Activated naive CD4-positive, alpha-beta T cell treated with anti-CD3 and anti-CD28 coated beads for 36 hours (primary cell): ENCODE measurements at regions of chr3 and their contacts with region 1.

Region 1: DNA sequence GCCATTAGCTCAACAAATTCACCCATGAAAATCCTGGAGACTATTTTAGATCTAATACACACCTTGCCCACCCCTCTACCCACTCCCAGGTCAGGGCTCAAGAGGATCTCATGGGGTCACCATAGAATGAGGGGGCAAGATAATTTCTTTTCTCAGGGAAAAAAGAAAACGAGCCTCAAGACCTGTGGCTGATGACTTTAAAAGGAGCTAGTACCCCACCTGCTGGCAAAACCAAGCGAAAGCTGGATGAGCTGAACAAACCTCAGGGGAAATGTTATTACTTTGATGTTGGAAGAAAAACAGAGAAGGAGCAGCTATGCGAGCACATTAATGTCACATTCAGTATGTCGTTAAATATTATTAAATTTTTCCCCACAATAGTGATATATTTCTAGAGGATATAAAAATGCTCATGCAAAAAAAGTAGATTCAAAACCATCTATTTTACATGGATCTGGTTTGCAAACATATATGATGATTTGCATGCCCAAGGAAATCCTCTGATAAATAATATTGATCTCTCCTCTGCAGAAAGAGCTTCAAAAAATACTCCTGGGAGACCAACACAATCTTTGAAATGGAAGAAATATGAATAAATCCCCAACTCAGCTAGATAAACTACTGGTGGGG is 37.7 kb downstream of the PLD1 start:
- DNase-seq: peak; percentile 76
- H3K4me3 Mint-ChIP-seq: no peak overlapping the region
- H3K27ac Mint-ChIP-seq: no peak overlapping the region
- H3K4me1 Mint-ChIP-seq: no peaks in the 10 kb centered on the region
- H3K27me3 Mint-ChIP-seq: peaks cover 4% of the 10 kb centered on the region

Region 2: GRCh38 chr3:171049861-171050444 is 722.6 kb before region 1 on chr3:
- CTCF ChIA-PET with region 1: interaction called, 10 read pairs
- intact Hi-C with region 1: loop called (anchors 1 kb)
- DNase-seq: peak; percentile 67
- H3K4me3 Mint-ChIP-seq: no peak overlapping the region
- H3K27ac Mint-ChIP-seq: no peak overlapping the region
- H3K4me1 Mint-ChIP-seq: no peaks in the 10 kb centered on the region
- H3K27me3 Mint-ChIP-seq: peaks cover 3% of the 10 kb centered on the region

Region 3: GRCh38 chr3:171614318-171614921 is 158.1 kb before region 1 on chr3:
- CTCF ChIA-PET with region 1: interaction called, 12 read pairs
- intact Hi-C with region 1: loop called (anchors 1 kb)
- DNase-seq: peak; percentile 7
- H3K4me3 Mint-ChIP-seq: no peak overlapping the region
- H3K27ac Mint-ChIP-seq: no peak overlapping the region
- H3K4me1 Mint-ChIP-seq: no peaks in the 10 kb centered on the region
- H3K27me3 Mint-ChIP-seq: peaks cover 2% of the 10 kb centered on the region

Region 4: GRCh38 chr3:171703756-171704401 is 68.7 kb before region 1 on chr3:
- CTCF ChIA-PET with region 1: interaction called, 18 read pairs
- intact Hi-C with region 1: loop called (anchors 1 kb)
- DNase-seq: peak; percentile 14
- H3K4me3 Mint-ChIP-seq: no peak overlapping the region
- H3K27ac Mint-ChIP-seq: no peak overlapping the region
- H3K4me1 Mint-ChIP-seq: no peaks in the 10 kb centered on the region
- H3K27me3 Mint-ChIP-seq: peaks cover 8% of the 10 kb centered on the region

Region 5: GRCh38 chr3:171829841-171830517 is 57.4 kb after region 1 on chr3:
- CTCF ChIA-PET with region 1: interaction called, 12 read pairs
- intact Hi-C with region 1: loop called (anchors 5 kb)
- DNase-seq: no peak
- H3K4me3 Mint-ChIP-seq: no peak overlapping the region
- H3K27ac Mint-ChIP-seq: no peak overlapping the region
- H3K4me1 Mint-ChIP-seq: no peaks in the 10 kb centered on the region
- H3K27me3 Mint-ChIP-seq: peaks cover 12% of the 10 kb centered on the region